ENCODE measurements at regions of chr2 and their contacts with region 1.

Region 1: GRCh38 chr2:158006961-158007719 is 94.5 kb upstream of the UPP2 start:
- DNase-seq: peak; percentile 49
- H3K4me3 Mint-ChIP-seq: no peak overlapping the region
- H3K27ac Mint-ChIP-seq: no peak overlapping the region
- H3K4me1 Mint-ChIP-seq: peaks cover 20% of the 10 kb centered on the region
- H3K27me3 Mint-ChIP-seq: peaks cover 14% of the 10 kb centered on the region

Region 2: GRCh38 chr2:157509744-157510143 is 497.4 kb before region 1 on chr2:
- CTCF ChIA-PET with region 1: interaction called, 11 read pairs
- DNase-seq: no peak
- H3K4me3 Mint-ChIP-seq: no peak overlapping the region
- H3K27ac Mint-ChIP-seq: no peak overlapping the region
- H3K4me1 Mint-ChIP-seq: no peaks in the 10 kb centered on the region
- H3K27me3 Mint-ChIP-seq: peaks cover 4% of the 10 kb centered on the region

Region 3: DNA sequence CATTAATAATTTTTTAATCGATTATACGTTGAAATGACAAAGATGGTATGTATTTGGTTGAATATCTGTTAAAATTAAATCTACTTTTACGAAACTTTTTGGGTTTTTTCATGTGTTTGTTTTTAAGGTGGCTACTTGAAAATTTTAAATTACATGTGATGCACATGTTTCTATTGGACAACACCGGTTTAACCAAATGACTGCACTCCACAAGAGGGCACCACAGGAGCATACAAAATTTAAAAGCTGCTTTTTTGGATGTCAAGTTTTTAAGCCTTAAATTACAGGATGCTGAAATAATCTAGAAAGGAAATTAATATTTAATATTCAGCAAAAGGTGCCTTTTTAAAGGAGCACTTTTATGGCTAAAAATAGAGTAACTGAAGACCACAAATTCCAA is 229.7 kb before region 1 on chr2:
- CTCF ChIA-PET with region 1: interaction called, 30 read pairs
- DNase-seq: peak; percentile 73
- H3K4me3 Mint-ChIP-seq: no peak overlapping the region
- H3K27ac Mint-ChIP-seq: no peak overlapping the region
- H3K4me1 Mint-ChIP-seq: peaks cover 12% of the 10 kb centered on the region
- H3K27me3 Mint-ChIP-seq: no peaks in the 10 kb centered on the region

Region 4: DNA sequence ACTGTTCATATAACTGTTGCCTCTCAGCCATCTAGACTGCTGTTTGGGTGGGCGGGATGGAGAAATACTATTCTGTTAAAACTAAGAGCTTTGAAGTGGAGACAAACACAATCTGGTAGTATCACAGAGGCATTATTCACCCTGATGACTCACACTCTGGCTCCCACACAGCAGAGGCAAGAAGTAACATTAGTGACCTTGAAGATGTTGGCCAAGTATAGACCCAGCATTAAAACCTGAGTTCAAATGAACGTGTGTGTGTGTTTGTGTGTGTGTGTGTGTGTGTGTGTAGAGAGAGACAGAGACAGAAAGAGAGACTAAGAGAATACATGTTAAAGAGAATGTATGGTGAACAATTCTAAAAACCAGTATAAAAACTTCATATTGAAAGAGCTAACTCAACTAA is 108.5 kb before region 1 on chr2:
- CTCF ChIA-PET with region 1: interaction called, 24 read pairs
- DNase-seq: peak; percentile 65
- H3K4me3 Mint-ChIP-seq: peak overlapping the region; percentile 78
- H3K27ac Mint-ChIP-seq: peak overlapping the region; percentile 100
- H3K4me1 Mint-ChIP-seq: peaks cover 86% of the 10 kb centered on the region
- H3K27me3 Mint-ChIP-seq: no peaks in the 10 kb centered on the region

Region 5: GRCh38 chr2:157980020-157980419 is 27.1 kb before region 1 on chr2:
- CTCF ChIA-PET with region 1: no interaction called
- DNase-seq: no peak
- H3K4me3 Mint-ChIP-seq: no peak overlapping the region
- H3K27ac Mint-ChIP-seq: no peak overlapping the region
- H3K4me1 Mint-ChIP-seq: no peaks in the 10 kb centered on the region
- H3K27me3 Mint-ChIP-seq: peaks cover 5% of the 10 kb centered on the region

Measured in activated naive CD4-positive, alpha-beta T cell treated with anti-CD3 and anti-CD28 coated beads, Interleukin-2, amount 10 ng/mL, durations not matched to agents 7 days and 5 days (primary cell).